Activated CD4-positive, alpha-beta memory T cell treated with anti-CD3 and anti-CD28 coated beads for 36 hours (primary cell): ENCODE measurements at regions of chr9 and their contacts with region 1.

Region 1: DNA sequence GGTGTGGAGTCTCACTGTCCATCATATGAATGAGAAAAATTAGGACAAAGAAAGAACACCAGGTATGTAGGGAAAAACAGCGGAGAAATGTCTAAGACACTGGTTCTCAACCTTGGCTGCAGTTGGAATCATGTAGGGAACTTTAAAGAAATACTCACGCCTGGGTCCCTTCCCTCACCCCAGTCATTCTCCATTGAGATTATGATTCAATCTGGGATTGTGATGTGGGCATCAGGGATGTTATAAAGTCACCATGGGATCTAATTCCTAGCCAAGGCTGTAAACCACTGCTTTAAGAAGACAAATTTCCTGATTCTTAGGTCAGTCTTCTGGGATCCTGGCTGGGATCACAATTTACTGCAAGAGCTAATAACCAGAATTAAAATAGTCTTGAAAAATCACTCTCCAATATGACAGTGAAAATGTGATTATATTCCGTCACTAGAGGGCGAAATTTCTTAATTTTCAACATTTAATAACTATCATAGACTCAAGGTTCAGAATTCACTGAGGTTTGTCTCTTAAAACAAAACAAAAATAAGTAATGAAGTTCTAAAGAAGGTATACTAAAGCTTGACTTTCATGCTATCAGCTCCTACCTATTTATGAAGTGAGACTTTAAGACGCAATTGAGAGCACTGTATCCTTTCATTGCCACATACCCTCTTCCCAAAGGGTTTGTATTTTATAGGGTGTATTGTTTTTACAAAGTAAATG is 60.5 kb downstream of the GLDC start:
- DNase-seq: no peak
- H3K4me3 Mint-ChIP-seq: no peak overlapping the region
- H3K27ac Mint-ChIP-seq: no peak overlapping the region
- H3K4me1 Mint-ChIP-seq: no peaks in the 10 kb centered on the region
- H3K27me3 Mint-ChIP-seq: no peaks in the 10 kb centered on the region

Region 2: GRCh38 chr9:6598249-6598725 is 13.2 kb after region 1 on chr9:
- CTCF ChIA-PET with region 1: interaction called, 10 read pairs
- POLR2A ChIA-PET with region 1: interaction called, 3 read pairs
- intact Hi-C with region 1: no loop called
- DNase-seq: peak; percentile 74
- H3K4me3 Mint-ChIP-seq: peak overlapping the region; percentile 47
- H3K27ac Mint-ChIP-seq: peak overlapping the region; percentile 87
- H3K4me1 Mint-ChIP-seq: peaks cover 8% of the 10 kb centered on the region
- H3K27me3 Mint-ChIP-seq: peaks cover 1% of the 10 kb centered on the region

Region 3: DNA sequence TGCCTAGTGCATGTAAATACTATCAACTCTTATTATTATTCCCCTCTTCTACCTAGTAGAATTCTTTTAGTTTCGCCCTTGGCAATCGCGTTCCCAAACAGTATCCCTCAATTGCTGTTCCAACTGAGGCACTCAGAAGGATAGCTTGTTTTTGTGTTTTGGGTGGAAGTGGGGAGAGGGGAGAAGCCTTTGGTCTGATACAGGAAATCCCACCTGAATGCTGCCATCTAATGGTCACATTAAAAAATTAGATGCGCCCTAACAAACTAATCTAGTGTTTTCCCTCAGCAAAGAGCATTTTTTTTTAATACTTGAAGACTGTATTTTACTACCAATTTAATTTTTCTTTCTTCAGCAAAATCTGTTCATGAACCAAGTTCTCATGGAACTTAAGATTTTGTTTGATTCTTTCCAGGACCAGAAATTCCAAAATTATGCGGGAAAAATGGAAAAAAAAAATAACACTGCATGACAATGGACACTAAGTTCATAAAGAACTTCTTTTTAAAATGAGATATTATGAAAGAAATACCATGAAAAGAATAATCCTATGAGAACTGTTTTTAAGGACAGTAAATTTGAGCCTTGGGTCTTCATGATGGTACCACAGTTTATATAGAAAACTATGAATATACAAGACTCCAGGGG is 82.7 kb after region 1 on chr9:
- CTCF ChIA-PET with region 1: interaction called, 8 read pairs
- POLR2A ChIA-PET with region 1: no interaction called
- intact Hi-C with region 1: loop called (anchors 1 kb)
- DNase-seq: no peak
- H3K4me3 Mint-ChIP-seq: no peak overlapping the region
- H3K27ac Mint-ChIP-seq: no peak overlapping the region
- H3K4me1 Mint-ChIP-seq: no peaks in the 10 kb centered on the region
- H3K27me3 Mint-ChIP-seq: no peaks in the 10 kb centered on the region

Region 4: GRCh38 chr9:6739218-6739617 is 154.2 kb after region 1 on chr9:
- CTCF ChIA-PET with region 1: interaction called, 3 read pairs
- POLR2A ChIA-PET with region 1: no interaction called
- intact Hi-C with region 1: loop called (anchors 5 kb)
- DNase-seq: no peak
- H3K4me3 Mint-ChIP-seq: no peak overlapping the region
- H3K27ac Mint-ChIP-seq: no peak overlapping the region
- H3K4me1 Mint-ChIP-seq: no peaks in the 10 kb centered on the region
- H3K27me3 Mint-ChIP-seq: peaks cover 2% of the 10 kb centered on the region

Region 5: GRCh38 chr9:7957803-7958202 is 1372.8 kb after region 1 on chr9:
- CTCF ChIA-PET with region 1: no interaction called
- POLR2A ChIA-PET with region 1: no interaction called
- intact Hi-C with region 1: no loop called
- DNase-seq: no peak
- H3K4me3 Mint-ChIP-seq: no peak overlapping the region
- H3K27ac Mint-ChIP-seq: no peak overlapping the region
- H3K4me1 Mint-ChIP-seq: no peaks in the 10 kb centered on the region
- H3K27me3 Mint-ChIP-seq: no peaks in the 10 kb centered on the region